Common myeloid progenitor, CD34-positive (primary cell): ENCODE measurements at regions of chr18 and their contacts with region 1.

Region 1: DNA sequence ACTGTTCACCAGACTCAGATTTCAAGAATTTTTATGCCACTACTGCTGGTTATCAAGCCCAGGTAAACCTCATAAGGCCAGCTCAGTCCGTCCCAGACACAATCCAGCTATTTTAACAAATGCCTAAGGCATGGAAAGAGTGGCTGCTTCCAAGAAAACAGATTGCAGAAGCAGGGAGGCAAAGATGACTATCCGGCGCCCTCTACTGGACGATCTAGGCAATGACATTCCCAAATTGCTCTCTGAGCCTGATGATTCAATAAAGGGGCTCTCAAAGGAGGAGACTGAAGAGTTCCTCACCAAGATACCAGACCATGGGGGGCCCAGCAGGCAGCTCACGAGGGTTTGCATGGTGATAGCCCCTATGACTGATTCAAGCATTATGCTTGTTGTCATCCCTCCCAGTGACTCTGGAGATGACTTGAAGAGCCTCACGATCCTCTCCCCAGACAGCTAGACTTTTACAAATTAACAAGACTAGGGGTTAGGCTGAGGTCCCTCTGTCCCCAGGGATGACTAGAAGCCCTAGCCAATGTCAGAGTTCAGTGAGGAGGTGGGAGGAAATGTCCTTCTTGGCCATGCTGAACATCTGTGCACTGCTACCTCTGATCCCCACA is 25.0 kb downstream of the SERPINB8 start:
- DNase-seq: peak; percentile 27 to 59 (median 48)
- H3K4me3 ChIP-seq: no peak overlapping the region
- H3K27ac ChIP-seq: no peak overlapping the region
- H3K4me1 ChIP-seq: no peaks in the 10 kb centered on the region
- H3K27me3 ChIP-seq: no peaks in the 10 kb centered on the region

Region 2: DNA sequence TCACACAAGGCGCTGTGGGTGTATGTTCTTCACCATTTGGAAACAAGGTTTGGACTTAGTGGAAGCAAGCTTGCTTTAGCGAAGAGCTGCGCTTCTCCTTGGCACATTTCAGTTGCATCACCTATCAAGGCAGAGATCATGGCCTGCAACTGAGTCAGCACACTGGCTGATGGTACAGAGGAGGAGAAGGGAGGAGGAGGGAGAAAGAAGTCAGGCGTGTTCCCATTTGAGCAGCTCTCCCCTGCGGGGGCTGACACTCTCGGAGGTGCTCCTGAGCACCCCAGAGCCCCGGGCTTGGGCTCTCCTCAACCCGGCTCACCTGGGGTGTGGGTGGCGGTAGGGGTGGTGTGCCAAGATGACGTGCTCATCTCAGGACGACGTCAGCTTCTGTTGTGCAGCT is 524.1 kb before region 1 on chr18:
- CTCF ChIA-PET with region 1: no interaction called
- POLR2A ChIA-PET with region 1: no interaction called
- DNase-seq: no peak
- H3K4me3 ChIP-seq: no peak overlapping the region
- H3K27ac ChIP-seq: no peak overlapping the region
- H3K4me1 ChIP-seq: no peaks in the 10 kb centered on the region
- H3K27me3 ChIP-seq: no peaks in the 10 kb centered on the region

Region 3: GRCh38 chr18:63963615-63964256 is 31.2 kb before region 1 on chr18:
- CTCF ChIA-PET with region 1: interaction called, 32 read pairs
- POLR2A ChIA-PET with region 1: no interaction called
- DNase-seq: peak; percentile 64 to 83 (median 76)
- H3K4me3 ChIP-seq: no peak overlapping the region
- H3K27ac ChIP-seq: no peak overlapping the region
- H3K4me1 ChIP-seq: no peaks in the 10 kb centered on the region
- H3K27me3 ChIP-seq: peaks cover 0 to 11% (median 0%) of the 10 kb centered on the region in 5 experiments